ENCODE measurements at regions of chr3 and their contacts with region 1.

Region 1: GRCh38 chr3:13414040-13414729 is 5.9 kb downstream of the NUP210 start:
- DNase-seq: peak; percentile 48 to 91 (median 79)
- ATAC-seq: peak; percentile 91
- H3K4me3 ChIP-seq: peak overlapping the region; percentile 19 to 29
- H3K4me3 Mint-ChIP-seq: peak overlapping the region; percentile 75
- H3K27ac ChIP-seq: peak overlapping the region; percentile 51 to 89
- H3K27ac Mint-ChIP-seq: peak overlapping the region; percentile 96
- H3K4me1 ChIP-seq: peaks cover 60% of the 10 kb centered on the region
- H3K4me1 Mint-ChIP-seq: peaks cover 69% of the 10 kb centered on the region
- H3K27me3 ChIP-seq: no peaks in the 10 kb centered on the region
- H3K27me3 Mint-ChIP-seq: no peaks in the 10 kb centered on the region
- CTCF ChIP-seq: no peak

Region 2: DNA sequence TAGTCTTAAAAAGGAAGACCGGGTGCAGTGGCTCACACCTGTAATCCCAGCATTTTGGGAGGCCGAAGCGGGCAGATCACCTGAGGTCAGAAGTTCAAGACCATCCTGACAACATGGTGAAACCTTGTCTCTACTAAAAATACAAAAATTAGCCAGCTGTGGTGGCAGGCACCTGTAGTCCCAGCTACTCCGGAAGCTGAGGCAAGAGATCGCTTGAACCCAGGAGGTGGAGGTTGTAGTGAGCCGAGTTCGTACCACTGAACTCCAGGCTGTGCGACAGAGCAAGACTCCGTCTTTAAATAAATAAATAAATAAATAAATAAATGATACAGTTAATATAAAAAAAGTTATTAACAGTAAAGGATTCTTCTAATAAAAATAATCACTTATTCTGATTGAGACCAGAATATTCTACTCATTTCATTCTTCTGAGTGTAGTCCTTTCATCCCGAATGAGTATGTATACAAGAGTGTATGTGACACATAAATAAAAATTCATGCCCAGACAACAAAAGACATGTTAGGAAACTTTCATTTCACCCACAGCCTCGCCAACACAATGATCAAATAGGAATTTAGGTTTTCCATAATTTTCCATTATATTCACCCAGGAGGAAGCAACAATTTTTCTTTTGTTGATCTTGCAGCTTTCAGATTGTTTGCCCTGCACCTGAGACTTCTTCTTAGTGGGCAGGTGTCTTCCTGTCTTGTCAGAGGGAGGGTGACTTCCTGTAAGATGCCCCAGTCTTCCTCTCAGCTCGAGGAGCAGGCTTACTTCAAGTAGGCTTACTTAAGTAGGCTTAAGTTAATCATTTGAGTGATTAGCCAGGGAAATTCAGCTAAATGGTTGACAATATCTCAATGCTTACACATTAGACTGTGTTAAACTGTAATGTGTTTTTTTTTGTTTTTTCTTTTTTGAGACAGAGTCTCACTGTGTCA is 13.7 kb after region 1 on chr3:
- CTCF ChIA-PET with region 1: interaction called, 23 read pairs
- POLR2A ChIA-PET with region 1: interaction called, 36 read pairs
- intact Hi-C with region 1: loop called in 1 of 2 experiments (anchors 2 kb)
- DNase-seq: peak in 5 of 9 experiments; percentile 35 to 78 (median 51)
- ATAC-seq: peak; percentile 99
- H3K4me3 ChIP-seq: peak overlapping the region in 1 of 2 experiments; percentile 2
- H3K4me3 Mint-ChIP-seq: peak overlapping the region; percentile 63
- H3K27ac ChIP-seq: peak overlapping the region; percentile 37 to 44
- H3K27ac Mint-ChIP-seq: peak overlapping the region; percentile 91
- H3K4me1 ChIP-seq: peaks cover 19% of the 10 kb centered on the region
- H3K4me1 Mint-ChIP-seq: peaks cover 36% of the 10 kb centered on the region
- H3K27me3 ChIP-seq: no peaks in the 10 kb centered on the region
- H3K27me3 Mint-ChIP-seq: no peaks in the 10 kb centered on the region
- CTCF ChIP-seq: no peak